GM13977 (cell line): ENCODE measurements at regions of chr1 and their contacts with region 1.

Region 1: DNA sequence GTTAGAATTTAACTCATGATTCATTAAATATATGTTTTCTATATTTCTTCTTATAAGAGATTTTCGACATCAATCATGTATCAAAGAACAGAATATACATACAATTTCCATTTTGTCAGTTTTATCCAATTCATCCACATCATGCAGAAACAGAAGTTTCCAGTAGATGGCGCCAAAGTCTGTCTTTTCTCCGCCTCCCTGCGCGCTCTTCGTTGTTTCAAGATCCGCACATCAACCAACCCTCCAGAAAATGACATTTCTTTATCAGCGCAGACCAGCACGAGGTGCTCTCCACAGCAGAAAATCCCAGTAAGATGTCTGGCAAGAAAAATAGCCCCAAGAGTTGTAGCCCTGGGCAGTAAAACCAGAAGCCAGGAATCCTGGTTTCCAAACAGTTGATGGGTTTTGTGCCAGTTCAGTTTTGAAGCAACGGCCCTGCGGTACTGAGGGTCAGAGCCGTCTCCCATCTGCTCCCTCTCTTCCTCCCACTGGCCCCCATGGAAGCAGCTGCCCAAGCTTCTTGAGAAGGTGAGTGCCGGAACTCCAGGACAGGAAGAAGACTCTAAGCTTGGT is 38.6 kb upstream of the GPR137B start:
- DNase-seq: peak; percentile 87
- CTCF ChIP-seq: peak; percentile 73

Region 2: GRCh38 chr1:236868625-236869467 is 765.1 kb after region 1 on chr1:
- in situ Hi-C with region 1: loop called (anchors 25 kb)
- DNase-seq: peak; percentile 42
- CTCF ChIP-seq: peak; percentile 95

Region 3: DNA sequence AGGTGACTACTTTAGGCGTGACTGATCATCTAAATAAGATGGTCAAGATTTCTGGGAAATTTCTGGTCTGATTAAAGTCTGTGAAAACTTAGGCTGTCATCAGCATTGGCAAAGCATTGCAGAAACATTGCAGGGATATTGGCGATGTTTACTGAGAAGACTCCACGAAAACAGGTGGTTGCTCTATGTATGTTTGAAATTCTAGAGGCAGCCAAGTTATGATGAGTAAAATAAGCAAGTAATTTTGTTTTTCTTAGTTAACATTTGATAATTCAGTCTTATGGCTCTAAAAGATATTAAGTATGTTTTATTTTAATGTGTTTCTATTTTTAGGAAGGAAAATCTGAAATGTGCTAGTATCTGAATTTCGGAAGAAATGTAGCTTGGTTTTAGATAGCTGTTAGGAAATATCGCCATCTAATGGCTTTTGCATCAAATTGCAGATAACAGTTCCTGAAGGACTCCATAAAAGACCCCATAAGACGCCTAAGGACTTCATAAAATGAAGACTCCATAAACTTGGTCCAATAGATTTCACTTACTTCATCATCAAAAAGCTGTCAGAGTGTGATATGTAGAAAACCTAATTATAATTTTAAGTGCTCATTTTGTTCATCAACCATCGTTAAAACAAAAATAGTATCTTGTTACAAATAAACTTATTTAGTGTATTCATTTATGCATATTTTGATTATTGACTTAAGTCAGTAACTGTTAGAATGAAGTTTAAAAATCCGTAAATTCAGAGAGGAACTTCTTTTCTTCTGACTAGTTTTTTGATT is 1282.8 kb after region 1 on chr1:
- in situ Hi-C with region 1: loop called (anchors 25 kb)
- DNase-seq: peak; percentile 26
- CTCF ChIP-seq: peak; percentile 65